HEK293 (cell line): ENCODE measurements at regions of chr20 and their contacts with region 1.

Region 1: DNA sequence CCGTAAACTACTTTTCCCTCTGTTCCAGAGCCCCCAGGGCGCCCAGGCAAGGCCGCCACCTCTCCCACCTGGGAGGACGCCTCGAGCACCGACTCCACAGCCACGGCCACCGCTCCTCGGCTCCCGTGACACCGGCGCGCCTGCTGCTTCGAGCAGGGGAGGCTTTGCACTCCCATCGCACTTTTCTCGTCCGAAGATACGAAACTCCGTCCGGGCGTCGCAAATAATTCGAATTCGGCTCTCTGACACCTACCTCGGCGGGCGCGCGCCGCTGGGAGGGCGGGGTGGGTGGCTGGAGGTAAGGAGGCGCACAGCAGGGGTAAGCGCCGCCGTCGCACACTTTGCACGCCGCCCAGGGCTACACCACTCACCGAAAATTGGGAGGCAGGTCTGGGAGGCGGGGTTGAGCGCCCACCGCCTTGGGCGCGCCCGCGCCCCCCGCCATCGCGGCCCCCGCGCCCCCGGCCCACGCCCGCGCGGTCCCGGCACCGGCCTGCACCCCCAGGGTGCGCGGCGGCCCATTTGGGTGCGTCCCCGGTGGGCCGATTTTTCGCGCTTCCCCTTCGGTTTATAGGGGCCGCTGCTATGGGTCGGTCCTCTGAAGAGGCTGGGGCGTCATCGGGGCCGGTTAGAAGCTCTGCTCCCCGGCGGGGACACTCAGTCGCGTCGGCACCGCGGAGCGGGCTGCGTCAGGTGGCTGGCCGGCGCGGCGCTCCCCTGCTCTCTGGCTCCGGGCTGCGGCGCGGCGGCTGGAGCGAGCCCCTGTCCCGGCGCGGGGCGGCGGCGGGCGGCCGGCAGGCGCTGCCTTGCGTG is 36.2 kb downstream of the GNAS start:
- H3K4me3 ChIP-seq: peak overlapping the region; percentile 86
- H3K27ac ChIP-seq: peak overlapping the region; percentile 97
- H3K4me1 ChIP-seq: peaks cover 4% of the 10 kb centered on the region
- CTCF ChIP-seq: no peak

Region 2: GRCh38 chr20:58650776-58651558 is 237.8 kb before region 1 on chr20 and contains the start of gene STX16:
- CTCF ChIA-PET with region 1: no interaction called
- POLR2A ChIA-PET with region 1: interaction called, 10 read pairs
- H3K4me3 ChIP-seq: peak within 1 kb of the TSS; percentile 99
- H3K27ac ChIP-seq: peak within 1 kb of the TSS; percentile 65
- H3K4me1 ChIP-seq: peaks cover 6% of the 10 kb centered on the region
- CTCF ChIP-seq: peak; percentile 92